Gastrocnemius medialis (tissue), 4 donors: ENCODE measurements at regions of chr10 and their contacts with region 1.

Region 1: GRCh38 chr10:7410862-7411670 is at the start of gene SFMBT2:
- DNase-seq: peak in 1 of 2 donors; percentile 52
- ATAC-seq: peak; percentile 46 to 55
- H3K4me3 ChIP-seq: peak within 1 kb of the TSS; percentile 58 to 83 (median 73)
- H3K27ac ChIP-seq: peak within 1 kb of the TSS; percentile 76 to 85 (median 82)
- H3K4me1 ChIP-seq: peaks cover 10 to 18% of the 10 kb centered on the region in 2 donors
- H3K27me3 ChIP-seq: no peaks in the 10 kb centered on the region
- CTCF ChIP-seq: no peak
- POLR2A ChIP-seq: peak; percentile 47 to 53
- total RNA-seq, gene SFMBT2: 1.1 to 6.9 (median 2.1) TPM

Region 2: DNA sequence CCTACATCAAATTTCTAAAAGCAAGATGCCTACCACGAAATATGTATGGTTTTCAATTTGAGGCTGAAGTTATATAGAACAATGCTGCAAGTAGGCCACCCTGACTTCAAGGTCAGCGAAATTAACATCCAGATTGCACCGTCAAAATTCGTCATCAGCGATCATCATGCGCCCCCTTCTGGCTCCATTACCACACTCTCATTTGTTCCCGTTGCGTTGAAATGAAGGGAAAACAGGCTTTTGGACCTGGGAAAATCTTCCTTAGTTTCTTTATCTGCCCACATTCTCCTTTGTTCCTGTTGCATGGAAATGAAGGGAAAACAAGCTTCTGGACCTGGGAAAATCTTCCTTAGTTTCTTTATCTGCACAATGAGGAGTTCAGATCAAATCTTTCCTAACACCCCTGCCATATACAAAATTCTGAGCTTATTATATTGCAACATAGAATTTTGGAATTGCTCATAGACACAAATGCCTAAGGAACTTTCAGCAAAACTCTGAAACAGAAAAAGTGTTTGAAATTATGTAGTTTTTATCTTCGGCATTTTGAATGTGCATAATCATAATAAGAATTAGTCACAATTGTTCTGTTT is 732.8 kb before region 1 on chr10:
- in situ Hi-C with region 1: loop called in 1 of 4 experiments (anchors 25 kb)
- intact Hi-C with region 1: no loop called
- DNase-seq: peak in 1 of 2 donors; percentile 27
- ATAC-seq: peak; percentile 52 to 84
- H3K4me3 ChIP-seq: no peak overlapping the region
- H3K27ac ChIP-seq: no peak overlapping the region
- H3K4me1 ChIP-seq: no peaks in the 10 kb centered on the region
- H3K27me3 ChIP-seq: no peaks in the 10 kb centered on the region
- CTCF ChIP-seq: peak; percentile 37 to 67 (median 54)
- POLR2A ChIP-seq: no peak

Region 3: GRCh38 chr10:6920072-6921019 is 490.7 kb before region 1 on chr10:
- in situ Hi-C with region 1: loop called (anchors 10 to 25 kb)
- intact Hi-C with region 1: loop called (anchors 2 kb)
- DNase-seq: peak; percentile 15 to 46
- ATAC-seq: peak; percentile 61 to 88
- H3K4me3 ChIP-seq: no peak overlapping the region
- H3K27ac ChIP-seq: no peak overlapping the region
- H3K4me1 ChIP-seq: peaks cover 0 to 7% of the 10 kb centered on the region in 2 donors
- H3K27me3 ChIP-seq: peaks cover 0 to under 1% (median 0%) of the 10 kb centered on the region in 3 donors
- CTCF ChIP-seq: peak in 4 of 5 experiments; percentile 29 to 68 (median 46)
- POLR2A ChIP-seq: no peak

Region 4: GRCh38 chr10:7218968-7219367 is 192.1 kb before region 1 on chr10:
- in situ Hi-C with region 1: no loop called
- intact Hi-C with region 1: loop called (anchors 2 kb)
- DNase-seq: no peak
- ATAC-seq: peak in 1 of 2 donors; percentile 97
- H3K4me3 ChIP-seq: no peak overlapping the region
- H3K27ac ChIP-seq: peak overlapping the region in 1 of 4 donors; percentile 8
- H3K4me1 ChIP-seq: peaks cover 3 to 9% of the 10 kb centered on the region in 2 donors
- H3K27me3 ChIP-seq: no peaks in the 10 kb centered on the region
- CTCF ChIP-seq: no peak
- POLR2A ChIP-seq: no peak

Region 5: GRCh38 chr10:7243873-7244272 is 167.2 kb before region 1 on chr10:
- in situ Hi-C with region 1: loop called in 1 of 4 experiments (anchors 10 kb)
- intact Hi-C with region 1: no loop called
- DNase-seq: no peak
- ATAC-seq: peak in 1 of 2 donors; percentile 62
- H3K4me3 ChIP-seq: no peak overlapping the region
- H3K27ac ChIP-seq: peak overlapping the region in 2 of 4 donors; percentile 19 to 42
- H3K4me1 ChIP-seq: peaks cover 0 to 5% of the 10 kb centered on the region in 2 donors
- H3K27me3 ChIP-seq: no peaks in the 10 kb centered on the region
- CTCF ChIP-seq: no peak
- POLR2A ChIP-seq: no peak

Region 6: DNA sequence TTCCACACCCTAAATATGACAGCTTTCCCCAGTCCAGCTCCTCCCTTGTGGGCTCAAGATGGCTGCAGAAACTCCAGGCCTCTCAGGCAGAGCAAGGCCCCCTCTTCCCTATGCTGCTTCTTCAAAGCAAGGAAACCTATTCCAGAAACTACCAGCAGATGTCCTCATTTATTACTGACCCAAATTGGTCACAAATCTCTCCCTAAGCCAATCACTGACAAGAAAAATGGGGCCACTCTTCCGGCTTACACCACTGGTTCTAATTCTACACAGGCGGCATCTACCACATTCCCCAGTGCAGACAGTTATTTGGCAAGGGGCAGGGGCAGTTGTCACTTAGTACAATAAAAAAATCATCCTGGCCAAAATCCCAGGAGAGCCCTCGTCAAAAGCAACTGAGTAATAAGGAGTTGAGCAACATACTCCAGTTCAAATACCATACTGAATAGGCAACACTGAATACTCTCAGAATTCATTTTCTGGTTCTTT is 150.6 kb before region 1 on chr10:
- in situ Hi-C with region 1: loop called (anchors 5 to 10 kb)
- intact Hi-C with region 1: loop called (anchors 1 kb)
- DNase-seq: peak; percentile 84 to 93
- ATAC-seq: peak; percentile 96 to 99
- H3K4me3 ChIP-seq: no peak overlapping the region
- H3K27ac ChIP-seq: peak overlapping the region; percentile 42 to 75 (median 60)
- H3K4me1 ChIP-seq: peaks cover 15 to 17% of the 10 kb centered on the region in 2 donors
- H3K27me3 ChIP-seq: no peaks in the 10 kb centered on the region
- CTCF ChIP-seq: peak; percentile 72 to 86 (median 78)
- POLR2A ChIP-seq: no peak

Region 7: GRCh38 chr10:7750222-7750621 is 339.2 kb after region 1 on chr10:
- in situ Hi-C with region 1: no loop called
- intact Hi-C with region 1: no loop called
- DNase-seq: no peak
- ATAC-seq: no peak
- H3K4me3 ChIP-seq: no peak overlapping the region
- H3K27ac ChIP-seq: no peak overlapping the region
- H3K4me1 ChIP-seq: no peaks in the 10 kb centered on the region
- H3K27me3 ChIP-seq: no peaks in the 10 kb centered on the region
- CTCF ChIP-seq: no peak
- POLR2A ChIP-seq: no peak